CD8-positive, alpha-beta T cell (primary cell): ENCODE measurements at regions of chr19 and their contacts with region 1.

Region 1: GRCh38 chr19:2475702-2476450 is at the start of gene GADD45B:
- DNase-seq: peak; percentile 95 to 98 (median 97)
- ATAC-seq: peak; percentile 57
- H3K4me3 ChIP-seq: peak within 1 kb of the TSS; percentile 98 to 100
- H3K4me3 Mint-ChIP-seq: peak within 1 kb of the TSS; percentile 99
- H3K27ac ChIP-seq: peak within 1 kb of the TSS; percentile 69 to 85
- H3K27ac Mint-ChIP-seq: peak within 1 kb of the TSS; percentile 87
- H3K4me1 ChIP-seq: peaks cover 30% of the 10 kb centered on the region
- H3K4me1 Mint-ChIP-seq: peaks cover 24% of the 10 kb centered on the region
- H3K27me3 ChIP-seq: no peaks in the 10 kb centered on the region
- H3K27me3 Mint-ChIP-seq: no peaks in the 10 kb centered on the region
- CTCF ChIP-seq: no peak
- total RNA-seq, gene GADD45B: 441 to 446 TPM

Region 2: GRCh38 chr19:2236314-2237050 is 239.4 kb before region 1 on chr19 and contains the starts of genes PLEKHJ1 and SF3A2:
- CTCF ChIA-PET with region 1: no interaction called
- POLR2A ChIA-PET with region 1: interaction called, 7 read pairs
- intact Hi-C with region 1: loop called (anchors 2 to 5 kb)
- DNase-seq: peak; percentile 96 to 100 (median 98)
- ATAC-seq: peak; percentile 81
- H3K4me3 ChIP-seq: peak within 1 kb of the TSS; percentile 75 to 83
- H3K4me3 Mint-ChIP-seq: peak within 1 kb of the TSS; percentile 97
- H3K27ac ChIP-seq: peak within 1 kb of the TSS; percentile 99
- H3K27ac Mint-ChIP-seq: peak within 1 kb of the TSS; percentile 99
- H3K4me1 ChIP-seq: peaks cover 58% of the 10 kb centered on the region
- H3K4me1 Mint-ChIP-seq: peaks cover 57% of the 10 kb centered on the region
- H3K27me3 ChIP-seq: no peaks in the 10 kb centered on the region
- H3K27me3 Mint-ChIP-seq: no peaks in the 10 kb centered on the region
- CTCF ChIP-seq: peak; percentile 99
- total RNA-seq, gene PLEKHJ1: 25.9 to 26.1 TPM
- total RNA-seq, gene SF3A2: 164 to 167 TPM

Region 3: DNA sequence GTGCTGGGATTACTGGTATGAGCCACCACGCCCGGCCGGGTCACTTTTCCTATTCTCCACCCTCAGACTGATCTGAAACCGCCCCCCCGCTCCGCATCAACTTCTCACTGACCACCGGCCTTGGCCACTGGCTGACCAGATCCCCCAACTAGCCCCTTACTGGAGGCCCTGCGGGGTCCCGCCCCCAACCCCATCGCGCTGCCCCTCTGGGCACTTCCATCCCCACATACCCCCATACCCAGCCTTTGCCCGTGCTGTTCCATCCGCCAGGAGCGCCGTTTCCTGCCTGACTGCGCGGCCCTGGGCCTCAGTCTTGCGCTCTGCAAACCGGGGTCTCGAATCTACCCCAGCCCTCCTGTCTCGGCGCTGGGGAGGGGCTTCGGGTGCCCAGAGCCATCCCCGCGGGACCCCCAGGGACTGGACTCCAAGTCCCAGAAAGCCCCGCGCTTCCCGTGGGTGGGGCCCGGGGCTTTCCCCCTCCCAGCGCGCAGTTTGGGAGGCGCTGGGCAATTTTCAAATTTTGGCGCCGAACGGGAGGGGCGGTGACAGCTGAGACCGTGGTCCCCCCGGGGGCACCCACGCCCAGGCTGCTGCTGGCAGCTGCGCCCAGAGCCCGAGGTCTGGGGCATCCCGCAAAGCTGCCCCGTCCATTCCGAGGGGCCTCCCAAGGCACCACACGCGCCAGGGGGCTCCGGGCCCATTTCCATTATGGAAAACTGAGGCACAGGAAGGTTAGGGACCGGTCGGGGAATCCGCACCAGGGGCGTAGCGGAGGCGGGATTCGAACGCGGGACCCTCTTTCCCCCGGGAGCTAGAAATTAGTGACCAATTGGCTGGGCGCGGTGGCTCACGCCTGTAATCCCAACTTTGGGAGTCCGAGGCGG is 13.9 kb before region 1 on chr19:
- CTCF ChIA-PET with region 1: interaction called, 7 read pairs
- POLR2A ChIA-PET with region 1: interaction called, 43 read pairs
- intact Hi-C with region 1: loop called in 1 of 2 experiments (anchors 1 kb)
- DNase-seq: peak in 8 of 9 experiments; percentile 24 to 68 (median 54)
- ATAC-seq: peak; percentile 72
- H3K4me3 ChIP-seq: peak overlapping the region; percentile 57 to 76
- H3K4me3 Mint-ChIP-seq: peak overlapping the region; percentile 73
- H3K27ac ChIP-seq: no peak overlapping the region
- H3K27ac Mint-ChIP-seq: no peak overlapping the region
- H3K4me1 ChIP-seq: peaks cover 16% of the 10 kb centered on the region
- H3K4me1 Mint-ChIP-seq: peaks cover 9% of the 10 kb centered on the region
- H3K27me3 ChIP-seq: peaks cover 0 to 8% of the 10 kb centered on the region in 2 experiments
- H3K27me3 Mint-ChIP-seq: no peaks in the 10 kb centered on the region
- CTCF ChIP-seq: no peak

Region 4: DNA sequence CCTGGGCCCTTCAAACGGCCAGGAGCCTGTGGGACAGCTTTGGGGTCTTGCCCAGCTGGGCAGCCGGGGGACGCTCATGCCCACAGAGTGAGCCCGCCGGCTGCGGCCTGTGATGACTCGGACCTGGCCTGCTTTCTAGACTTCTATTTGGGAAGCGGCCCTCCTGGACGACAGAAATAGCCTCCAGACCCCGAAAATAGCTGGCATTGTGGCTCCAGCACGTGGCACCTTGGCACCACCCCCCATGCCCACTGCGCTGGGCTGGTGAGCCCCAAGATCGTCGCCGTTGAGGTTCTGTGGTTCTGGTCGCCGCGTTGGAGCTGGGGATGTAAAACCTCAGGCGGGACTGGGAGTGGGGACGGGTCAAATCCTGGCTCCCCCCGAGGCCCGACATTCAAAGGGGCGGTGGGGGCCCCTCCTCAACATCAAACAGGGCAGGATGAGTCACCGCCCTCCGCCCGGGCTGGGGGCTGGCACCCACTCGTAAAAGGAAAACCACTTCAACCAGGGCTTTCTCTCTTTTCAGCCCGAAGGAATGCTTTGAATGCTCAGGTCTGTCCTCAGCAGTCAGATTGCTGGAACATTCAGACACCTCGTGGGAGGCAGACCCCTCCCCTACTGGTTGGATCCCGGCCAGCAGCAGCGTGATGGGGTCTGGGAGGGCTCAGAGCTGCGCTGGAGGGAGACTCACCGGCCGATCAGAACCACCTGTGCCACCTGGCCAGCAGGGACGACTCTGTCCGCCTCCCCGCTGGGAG is 42.2 kb after region 1 on chr19:
- CTCF ChIA-PET with region 1: interaction called, 14 read pairs
- POLR2A ChIA-PET with region 1: interaction called, 6 read pairs
- intact Hi-C with region 1: loop called in 1 of 2 experiments (anchors 5 kb)
- DNase-seq: peak in 6 of 9 experiments; percentile 35 to 66 (median 54)
- ATAC-seq: peak; percentile 73
- H3K4me3 ChIP-seq: no peak overlapping the region
- H3K4me3 Mint-ChIP-seq: peak overlapping the region; percentile 37
- H3K27ac ChIP-seq: no peak overlapping the region
- H3K27ac Mint-ChIP-seq: no peak overlapping the region
- H3K4me1 ChIP-seq: peaks cover 11% of the 10 kb centered on the region
- H3K4me1 Mint-ChIP-seq: peaks cover 4% of the 10 kb centered on the region
- H3K27me3 ChIP-seq: no peaks in the 10 kb centered on the region
- H3K27me3 Mint-ChIP-seq: no peaks in the 10 kb centered on the region
- CTCF ChIP-seq: no peak

Region 5: GRCh38 chr19:2561895-2562294 is 86.0 kb after region 1 on chr19:
- CTCF ChIA-PET with region 1: interaction called, 12 read pairs
- POLR2A ChIA-PET with region 1: interaction called, 65 read pairs
- intact Hi-C with region 1: loop called in 1 of 2 experiments (anchors 5 kb)
- DNase-seq: peak; percentile 30 to 88 (median 72)
- ATAC-seq: peak; percentile 90
- H3K4me3 ChIP-seq: peak overlapping the region; percentile 65 to 89
- H3K4me3 Mint-ChIP-seq: peak overlapping the region; percentile 96
- H3K27ac ChIP-seq: peak overlapping the region; percentile 78 to 80
- H3K27ac Mint-ChIP-seq: peak overlapping the region; percentile 99
- H3K4me1 ChIP-seq: peaks cover 17% of the 10 kb centered on the region
- H3K4me1 Mint-ChIP-seq: peaks cover 14% of the 10 kb centered on the region
- H3K27me3 ChIP-seq: no peaks in the 10 kb centered on the region
- H3K27me3 Mint-ChIP-seq: no peaks in the 10 kb centered on the region
- CTCF ChIP-seq: no peak

Region 6: GRCh38 chr19:2610637-2611482 is 135.0 kb after region 1 on chr19:
- CTCF ChIA-PET with region 1: interaction called, 380 read pairs
- POLR2A ChIA-PET with region 1: interaction called, 145 read pairs
- intact Hi-C with region 1: loop called (anchors 1 kb)
- DNase-seq: peak; percentile 73 to 96 (median 89)
- ATAC-seq: peak; percentile 37
- H3K4me3 ChIP-seq: peak overlapping the region; percentile 37 to 42
- H3K4me3 Mint-ChIP-seq: peak overlapping the region; percentile 81
- H3K27ac ChIP-seq: no peak overlapping the region
- H3K27ac Mint-ChIP-seq: peak overlapping the region; percentile 57
- H3K4me1 ChIP-seq: peaks cover 30% of the 10 kb centered on the region
- H3K4me1 Mint-ChIP-seq: peaks cover 39% of the 10 kb centered on the region
- H3K27me3 ChIP-seq: peaks cover 0 to 2% of the 10 kb centered on the region in 2 experiments
- H3K27me3 Mint-ChIP-seq: no peaks in the 10 kb centered on the region
- CTCF ChIP-seq: peak; percentile 99